ENCODE measurements at regions of chr2 and their contacts with region 1.

Region 1: DNA sequence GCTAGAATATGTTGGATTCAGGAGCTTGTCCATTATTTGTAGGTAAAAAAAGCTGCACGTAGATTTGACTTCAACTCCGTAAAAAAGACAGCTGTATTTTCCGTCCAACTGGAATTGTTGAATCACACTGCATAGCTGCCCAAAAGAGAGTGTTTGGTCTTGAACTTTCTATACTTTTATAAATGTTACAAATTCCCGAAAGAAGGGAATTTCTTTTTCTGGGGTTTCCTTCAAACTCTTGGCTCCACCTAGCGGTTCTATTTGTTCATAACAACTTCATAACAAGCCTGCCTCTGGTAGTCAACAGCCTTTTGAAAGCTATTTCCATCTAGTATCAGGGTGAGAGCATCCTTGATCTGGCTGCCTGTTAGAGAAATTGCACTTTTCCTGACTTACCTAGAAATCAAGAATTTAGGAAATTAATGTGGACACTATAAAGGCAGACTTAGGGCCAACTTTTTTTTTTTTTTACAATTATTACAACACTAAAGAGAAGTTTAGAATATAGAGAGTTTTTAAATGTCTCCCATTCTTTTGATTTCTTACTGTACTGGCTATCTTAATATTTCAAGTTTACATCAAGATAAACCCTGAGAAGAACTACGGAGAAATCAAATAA is 48.1 kb downstream of the TMEM185B start:
- DNase-seq: peak; percentile 82
- H3K4me3 Mint-ChIP-seq: no peak overlapping the region
- H3K27ac Mint-ChIP-seq: peak overlapping the region; percentile 18
- H3K4me1 Mint-ChIP-seq: peaks cover 36% of the 10 kb centered on the region
- H3K27me3 Mint-ChIP-seq: no peaks in the 10 kb centered on the region

Region 2: GRCh38 chr2:119702918-119703401 is 472.1 kb before region 1 on chr2:
- intact Hi-C with region 1: loop called (anchors 1 kb)
- DNase-seq: peak; percentile 91
- H3K4me3 Mint-ChIP-seq: no peak overlapping the region
- H3K27ac Mint-ChIP-seq: no peak overlapping the region
- H3K4me1 Mint-ChIP-seq: peaks cover 10% of the 10 kb centered on the region
- H3K27me3 Mint-ChIP-seq: no peaks in the 10 kb centered on the region

Region 3: GRCh38 chr2:119826370-119826961 is 348.6 kb before region 1 on chr2:
- intact Hi-C with region 1: loop called (anchors 2 kb)
- DNase-seq: peak; percentile 81
- H3K4me3 Mint-ChIP-seq: no peak overlapping the region
- H3K27ac Mint-ChIP-seq: no peak overlapping the region
- H3K4me1 Mint-ChIP-seq: peaks cover 18% of the 10 kb centered on the region
- H3K27me3 Mint-ChIP-seq: no peaks in the 10 kb centered on the region

Region 4: DNA sequence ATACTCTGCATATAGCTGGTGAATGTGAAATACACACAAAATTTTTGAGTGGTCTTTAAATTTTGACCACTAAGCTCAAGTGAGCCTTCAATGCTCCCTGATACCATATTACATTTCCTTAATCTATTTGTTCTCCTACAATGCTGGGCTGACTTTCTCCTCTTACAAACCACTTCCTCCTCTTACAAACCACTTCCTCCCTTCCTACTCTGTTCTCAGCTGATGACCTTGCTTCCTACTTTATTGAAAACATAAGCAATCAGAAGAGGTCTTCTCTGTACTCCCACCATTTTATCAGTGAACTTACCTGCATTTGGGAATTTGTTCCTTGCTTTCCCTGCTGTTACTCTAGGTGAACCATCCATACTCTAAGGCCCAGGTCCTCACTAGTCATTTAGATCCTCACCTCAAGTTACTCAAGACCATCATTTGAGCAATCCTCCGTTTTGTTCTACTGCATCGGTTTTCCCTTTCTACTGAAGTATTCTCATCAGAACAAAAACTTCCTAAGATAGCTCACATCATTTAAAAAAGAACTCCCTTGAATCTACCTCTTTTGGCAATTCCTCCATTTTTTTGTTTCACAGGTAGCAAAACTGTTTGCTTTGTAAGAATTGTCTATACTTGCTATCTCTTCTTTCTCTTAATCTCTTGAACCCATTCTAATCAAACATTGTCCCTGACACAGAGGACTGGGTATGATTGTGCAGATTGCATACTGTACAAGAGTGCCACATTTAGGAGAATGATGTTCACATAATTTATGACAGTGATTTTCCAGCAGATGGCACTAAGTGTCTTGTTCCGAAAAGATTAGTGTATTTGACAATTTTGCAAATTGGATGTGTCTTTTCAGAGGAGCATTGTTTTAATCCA is 65.6 kb before region 1 on chr2:
- intact Hi-C with region 1: loop called (anchors 1 kb)
- DNase-seq: peak; percentile 76
- H3K4me3 Mint-ChIP-seq: peak overlapping the region; percentile 58
- H3K27ac Mint-ChIP-seq: peak overlapping the region; percentile 22
- H3K4me1 Mint-ChIP-seq: peaks cover 21% of the 10 kb centered on the region
- H3K27me3 Mint-ChIP-seq: peaks cover 26% of the 10 kb centered on the region

Region 5: GRCh38 chr2:120252225-120253021 is 77.4 kb after region 1 on chr2 and contains the start of gene RALB:
- intact Hi-C with region 1: loop called (anchors 1 kb)
- DNase-seq: peak; percentile 100
- H3K4me3 Mint-ChIP-seq: peak within 1 kb of the TSS; percentile 99
- H3K27ac Mint-ChIP-seq: peak within 1 kb of the TSS; percentile 96
- H3K4me1 Mint-ChIP-seq: peaks cover 70% of the 10 kb centered on the region
- H3K27me3 Mint-ChIP-seq: peaks cover 4% of the 10 kb centered on the region
- total RNA-seq, gene RALB: 72.1 and 80.0 TPM in 2 replicates